ENCODE measurements at regions of chr22 and their contacts with region 1.

Region 1: DNA sequence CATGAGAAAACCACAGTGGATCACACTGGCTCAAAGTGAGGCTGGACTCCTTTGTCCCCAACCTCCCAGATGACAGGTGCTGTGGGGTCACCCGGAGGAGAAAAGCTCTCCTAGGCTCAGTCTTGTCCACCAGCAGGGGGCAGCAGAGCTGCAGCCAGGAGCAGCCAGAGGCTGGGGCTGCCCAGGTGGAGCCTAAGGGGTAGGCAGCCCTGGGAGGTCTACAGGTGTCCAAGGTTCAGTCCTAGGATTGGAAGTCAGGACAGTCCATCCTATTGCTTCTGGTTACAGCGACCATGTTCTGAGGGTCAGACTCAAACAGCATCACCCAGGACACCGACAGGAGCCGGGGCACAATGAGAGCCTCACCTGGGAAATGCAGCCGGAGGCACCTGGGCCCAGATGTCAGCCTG is 77.6 kb upstream of the IGLL5 start:
- DNase-seq: peak; percentile 31 to 73 (median 41)
- H3K4me3 ChIP-seq: no peak overlapping the region
- H3K4me3 Mint-ChIP-seq: no peak overlapping the region
- H3K27ac ChIP-seq: no peak overlapping the region
- H3K27ac Mint-ChIP-seq: no peak overlapping the region
- H3K4me1 ChIP-seq: peaks cover 27 to 33% of the 10 kb centered on the region in 2 donors
- H3K4me1 Mint-ChIP-seq: peaks cover 36% of the 10 kb centered on the region
- H3K27me3 ChIP-seq: no peaks in the 10 kb centered on the region
- H3K27me3 Mint-ChIP-seq: peaks cover 0 to 3% (median 0%) of the 10 kb centered on the region in 3 donors
- CTCF ChIP-seq: peak; percentile 99

Region 2: GRCh38 chr22:22787786-22788459 is 22.1 kb before region 1 on chr22:
- intact Hi-C with region 1: no loop called
- DNase-seq: peak; percentile 45 to 63 (median 45)
- H3K4me3 ChIP-seq: no peak overlapping the region
- H3K4me3 Mint-ChIP-seq: no peak overlapping the region
- H3K27ac ChIP-seq: no peak overlapping the region
- H3K27ac Mint-ChIP-seq: no peak overlapping the region
- H3K4me1 ChIP-seq: no peaks in the 10 kb centered on the region
- H3K4me1 Mint-ChIP-seq: no peaks in the 10 kb centered on the region
- H3K27me3 ChIP-seq: no peaks in the 10 kb centered on the region
- H3K27me3 Mint-ChIP-seq: peaks cover 5 to 7% (median 6%) of the 10 kb centered on the region in 3 donors
- CTCF ChIP-seq: peak; percentile 96

Region 3: GRCh38 chr22:22848364-22848866 is 38.4 kb after region 1 on chr22:
- intact Hi-C with region 1: loop called (anchors 5 kb)
- DNase-seq: peak; percentile 50 to 68 (median 63)
- H3K4me3 ChIP-seq: no peak overlapping the region
- H3K4me3 Mint-ChIP-seq: no peak overlapping the region
- H3K27ac ChIP-seq: no peak overlapping the region
- H3K27ac Mint-ChIP-seq: no peak overlapping the region
- H3K4me1 ChIP-seq: no peaks in the 10 kb centered on the region
- H3K4me1 Mint-ChIP-seq: peaks cover 9% of the 10 kb centered on the region
- H3K27me3 ChIP-seq: no peaks in the 10 kb centered on the region
- H3K27me3 Mint-ChIP-seq: peaks cover 0 to 4% (median 2%) of the 10 kb centered on the region in 3 donors
- CTCF ChIP-seq: peak; percentile 98

Region 4: DNA sequence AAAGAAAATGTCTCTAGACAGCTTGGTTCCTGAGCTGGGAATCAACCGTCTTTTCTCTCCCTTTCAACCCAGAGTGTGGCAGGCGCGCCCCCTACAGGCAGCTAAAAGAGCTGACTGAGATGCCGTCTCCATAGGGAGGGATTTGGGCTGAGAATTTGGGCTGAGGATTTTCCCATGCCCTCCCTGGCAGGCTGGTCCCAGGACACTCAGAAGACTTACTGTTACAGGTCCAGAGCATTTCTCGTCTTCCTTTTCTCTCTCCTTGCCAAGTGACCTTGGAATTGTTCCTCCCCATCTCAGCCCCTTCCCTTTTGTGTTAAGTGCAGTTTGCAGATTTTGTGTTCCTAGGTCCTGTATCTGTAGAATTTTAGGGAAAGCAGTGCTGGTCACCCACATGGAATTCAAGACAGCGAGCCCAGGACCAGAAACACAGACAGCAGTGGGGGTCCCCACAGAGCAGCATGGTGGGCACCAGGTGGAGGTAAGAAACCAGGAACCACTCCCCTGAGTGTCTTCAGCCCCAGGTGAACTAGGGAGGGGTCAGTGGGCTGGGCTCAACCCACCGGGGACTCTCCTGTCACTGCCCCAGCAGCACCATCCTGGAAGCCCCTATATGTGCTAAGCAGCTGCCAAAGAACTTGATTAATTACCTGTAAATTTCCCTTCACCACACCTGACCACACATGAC is 67.6 kb after region 1 on chr22:
- intact Hi-C with region 1: loop called (anchors 2 to 5 kb)
- DNase-seq: peak; percentile 56 to 70 (median 61)
- H3K4me3 ChIP-seq: no peak overlapping the region
- H3K4me3 Mint-ChIP-seq: no peak overlapping the region
- H3K27ac ChIP-seq: no peak overlapping the region
- H3K27ac Mint-ChIP-seq: no peak overlapping the region
- H3K4me1 ChIP-seq: peaks cover 18 to 20% of the 10 kb centered on the region in 2 donors
- H3K4me1 Mint-ChIP-seq: peaks cover 20% of the 10 kb centered on the region
- H3K27me3 ChIP-seq: no peaks in the 10 kb centered on the region
- H3K27me3 Mint-ChIP-seq: peaks cover 0 to 9% (median 5%) of the 10 kb centered on the region in 3 donors
- CTCF ChIP-seq: peak; percentile 86

Measured in CD14-positive monocyte (primary cell).